Activated naive CD4-positive, alpha-beta T cell treated with anti-CD3 and anti-CD28 coated beads for 36 hours (primary cell): ENCODE measurements at regions of chr3 and their contacts with region 1.

Region 1: GRCh38 chr3:11236595-11237461 is 35.4 kb upstream of the ATG7 start:
- DNase-seq: peak; percentile 89
- H3K4me3 Mint-ChIP-seq: no peak overlapping the region
- H3K27ac Mint-ChIP-seq: no peak overlapping the region
- H3K4me1 Mint-ChIP-seq: peaks cover 37% of the 10 kb centered on the region
- H3K27me3 Mint-ChIP-seq: peaks cover 6% of the 10 kb centered on the region

Region 2: GRCh38 chr3:11060500-11061251 is 176.2 kb before region 1 on chr3:
- CTCF ChIA-PET with region 1: no interaction called
- intact Hi-C with region 1: no loop called
- DNase-seq: peak; percentile 51
- H3K4me3 Mint-ChIP-seq: no peak overlapping the region
- H3K27ac Mint-ChIP-seq: no peak overlapping the region
- H3K4me1 Mint-ChIP-seq: no peaks in the 10 kb centered on the region
- H3K27me3 Mint-ChIP-seq: peaks cover 13% of the 10 kb centered on the region

Region 3: DNA sequence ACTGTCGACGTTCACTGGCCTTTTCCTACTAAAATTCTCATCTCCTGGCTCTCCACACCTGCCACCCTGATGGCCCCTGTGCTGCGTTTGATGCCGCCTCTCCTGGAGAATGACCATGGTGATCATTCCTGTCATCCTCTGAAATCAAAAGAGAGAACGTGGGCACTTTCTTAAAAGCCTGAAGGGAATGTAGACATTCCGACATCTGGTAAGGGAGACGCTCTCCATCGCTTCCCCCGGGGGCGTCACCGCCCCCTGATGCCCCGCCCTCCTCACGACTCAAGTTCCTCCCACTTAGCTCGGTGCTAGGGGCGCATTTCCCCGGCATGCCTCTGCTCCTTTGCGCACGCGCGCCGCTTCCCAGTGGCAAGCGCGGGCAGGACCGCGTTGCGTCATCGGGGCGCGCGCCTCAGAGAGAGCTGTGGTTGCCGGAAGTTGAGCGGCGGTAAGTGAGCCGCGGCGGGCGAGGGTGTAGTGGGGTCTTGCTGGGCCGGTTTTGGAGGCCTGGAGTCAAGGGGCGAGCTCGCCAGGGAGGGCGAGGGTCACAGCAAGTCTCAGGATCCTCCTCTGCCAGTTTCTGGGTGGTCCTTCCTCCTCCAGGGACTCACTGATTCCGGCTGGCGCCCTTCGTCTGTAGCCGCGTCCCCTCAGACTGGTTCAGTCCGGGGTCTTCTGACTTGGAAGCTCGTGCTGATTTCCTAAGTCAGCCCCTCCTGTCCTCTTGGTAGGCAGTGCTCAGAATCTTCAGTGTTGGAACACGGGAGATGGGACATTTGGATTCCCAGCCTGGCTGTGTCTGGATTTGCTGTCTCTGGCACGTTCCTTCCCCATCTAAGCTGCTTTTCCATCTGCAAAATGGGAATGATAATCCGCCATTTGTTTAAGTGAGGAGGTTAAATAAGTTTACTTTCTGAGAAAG is 35.4 kb after region 1 on chr3 and contains the start of gene ATG7:
- CTCF ChIA-PET with region 1: interaction called, 3 read pairs
- intact Hi-C with region 1: loop called (anchors 1 kb)
- DNase-seq: peak; percentile 97
- H3K4me3 Mint-ChIP-seq: peak within 1 kb of the TSS; percentile 93
- H3K27ac Mint-ChIP-seq: peak within 1 kb of the TSS; percentile 93
- H3K4me1 Mint-ChIP-seq: peaks cover 43% of the 10 kb centered on the region
- H3K27me3 Mint-ChIP-seq: no peaks in the 10 kb centered on the region
- total RNA-seq, gene ATG7: 25.9 to 27.0 TPM

Region 4: GRCh38 chr3:11335056-11335608 is 98.3 kb after region 1 on chr3:
- CTCF ChIA-PET with region 1: interaction called, 54 read pairs
- intact Hi-C with region 1: loop called (anchors 1 kb)
- DNase-seq: peak; percentile 9
- H3K4me3 Mint-ChIP-seq: no peak overlapping the region
- H3K27ac Mint-ChIP-seq: no peak overlapping the region
- H3K4me1 Mint-ChIP-seq: peaks cover 7% of the 10 kb centered on the region
- H3K27me3 Mint-ChIP-seq: no peaks in the 10 kb centered on the region

Region 5: DNA sequence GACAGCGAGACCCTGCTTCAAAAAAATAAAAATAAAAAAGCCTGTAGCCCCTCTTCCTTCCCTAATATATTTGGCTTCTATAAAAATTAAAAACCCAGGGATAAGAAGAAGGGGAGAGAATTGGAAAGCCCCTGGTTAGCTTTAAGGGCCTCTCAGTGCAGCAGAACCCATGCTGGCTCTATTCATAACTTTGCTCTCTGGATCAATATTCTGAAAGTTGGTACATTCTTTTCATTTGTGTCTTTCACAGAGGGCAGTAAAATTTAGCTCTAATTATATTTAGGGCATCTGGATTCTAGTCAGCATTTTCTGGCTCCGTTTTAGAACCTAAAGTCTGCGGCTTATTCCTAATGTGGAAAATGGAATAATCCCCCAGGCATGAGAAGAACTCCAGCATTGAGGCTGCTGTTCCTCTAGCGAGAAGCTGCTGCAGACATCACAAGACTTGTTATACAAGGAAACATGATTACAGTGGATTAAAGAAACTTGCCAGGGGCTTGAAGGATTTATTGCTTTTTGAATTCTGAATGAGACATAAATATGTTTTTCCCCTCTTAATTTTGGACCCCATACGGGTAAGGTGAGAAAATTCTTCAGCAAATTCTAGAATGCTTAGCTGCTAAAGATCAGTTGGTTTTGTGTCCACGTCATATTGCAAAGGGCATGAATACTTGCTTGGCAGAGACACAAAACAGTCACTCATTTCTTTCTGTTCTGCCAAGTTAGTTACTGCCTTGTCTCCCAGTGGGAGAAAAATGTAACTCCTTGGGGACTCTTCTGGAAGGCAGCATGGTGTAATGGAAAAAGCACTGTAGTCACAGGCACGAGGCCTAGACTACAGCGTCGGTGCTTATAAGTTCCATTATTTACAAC is 229.2 kb after region 1 on chr3:
- CTCF ChIA-PET with region 1: no interaction called
- intact Hi-C with region 1: no loop called
- DNase-seq: no peak
- H3K4me3 Mint-ChIP-seq: no peak overlapping the region
- H3K27ac Mint-ChIP-seq: no peak overlapping the region
- H3K4me1 Mint-ChIP-seq: no peaks in the 10 kb centered on the region
- H3K27me3 Mint-ChIP-seq: no peaks in the 10 kb centered on the region

Region 6: DNA sequence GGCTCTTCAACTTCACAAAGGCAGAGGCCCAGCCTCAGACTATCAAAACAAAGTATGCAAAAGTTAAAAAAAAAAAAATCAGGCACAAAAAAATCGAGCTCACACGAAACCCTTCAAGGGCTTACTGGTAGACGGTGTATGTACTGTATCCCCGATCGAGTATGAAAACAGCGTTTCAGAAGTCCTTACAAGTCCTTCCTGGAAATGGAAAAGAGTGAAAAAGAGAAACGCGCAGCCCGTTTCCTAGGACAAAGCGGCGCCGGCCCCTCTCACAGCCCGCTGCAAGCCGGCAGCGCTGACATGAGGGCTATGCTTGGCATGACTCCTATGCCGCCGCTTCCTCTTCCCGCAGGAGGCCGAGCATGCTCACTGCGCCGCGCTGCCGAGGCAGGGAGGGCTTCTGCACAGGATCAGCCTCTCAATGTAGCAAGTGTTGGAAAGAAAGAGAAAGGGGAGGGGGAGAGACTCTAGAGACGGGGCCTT is 406.8 kb after region 1 on chr3 and contains the start of gene VGLL4:
- CTCF ChIA-PET with region 1: no interaction called
- intact Hi-C with region 1: loop called (anchors 2 kb)
- DNase-seq: peak; percentile 72
- H3K4me3 Mint-ChIP-seq: peak within 1 kb of the TSS; percentile 98
- H3K27ac Mint-ChIP-seq: peak within 1 kb of the TSS; percentile 89
- H3K4me1 Mint-ChIP-seq: peaks cover 33% of the 10 kb centered on the region
- H3K27me3 Mint-ChIP-seq: no peaks in the 10 kb centered on the region
- total RNA-seq, gene VGLL4: 6.3 to 7.7 TPM

Region 7: DNA sequence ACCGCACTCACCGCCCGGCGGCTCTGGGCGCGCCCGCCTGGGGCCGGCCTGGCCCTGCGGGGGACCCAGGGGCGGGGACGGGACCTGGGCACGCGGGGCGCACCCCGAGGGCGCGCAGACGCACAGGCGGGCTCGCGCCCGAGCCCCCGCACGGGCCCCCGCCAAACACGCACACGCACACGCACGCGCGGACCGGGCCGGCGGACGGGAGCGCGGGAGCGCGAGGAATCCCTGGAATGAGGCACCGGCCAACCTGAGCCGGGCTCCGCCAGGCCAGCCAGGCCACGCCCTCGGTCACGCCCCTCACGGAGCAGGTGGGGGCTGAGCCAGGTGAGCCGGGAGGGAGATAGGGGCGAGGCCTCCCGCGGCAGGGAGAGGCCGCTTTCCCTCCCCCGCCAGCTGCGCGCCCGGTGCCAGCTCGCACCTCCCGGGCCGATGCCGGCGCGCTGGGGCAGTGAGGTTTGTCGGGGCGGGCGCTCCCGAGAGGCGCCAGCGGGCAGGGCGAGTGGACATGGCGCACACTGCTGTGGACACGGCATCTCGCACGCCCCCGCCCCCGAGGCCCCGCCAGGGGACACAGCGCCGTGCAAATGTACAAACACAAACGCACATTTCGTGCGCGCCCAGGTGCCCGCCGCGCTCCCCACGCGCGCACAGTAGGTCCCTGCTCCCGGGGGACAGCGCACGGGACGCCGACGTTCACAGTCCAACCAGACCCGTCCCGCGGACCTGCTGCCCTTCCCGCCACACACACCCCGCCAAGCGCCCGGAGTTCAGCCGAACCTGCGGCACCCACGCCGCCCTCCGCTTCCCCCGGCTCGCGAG is 482.8 kb after region 1 on chr3:
- CTCF ChIA-PET with region 1: no interaction called
- intact Hi-C with region 1: loop called (anchors 2 kb)
- DNase-seq: peak; percentile 73
- H3K4me3 Mint-ChIP-seq: peak overlapping the region; percentile 88
- H3K27ac Mint-ChIP-seq: no peak overlapping the region
- H3K4me1 Mint-ChIP-seq: peaks cover 17% of the 10 kb centered on the region
- H3K27me3 Mint-ChIP-seq: peaks cover 5% of the 10 kb centered on the region